ENCODE measurements at regions of chr2 and their contacts with region 1.

Region 1: DNA sequence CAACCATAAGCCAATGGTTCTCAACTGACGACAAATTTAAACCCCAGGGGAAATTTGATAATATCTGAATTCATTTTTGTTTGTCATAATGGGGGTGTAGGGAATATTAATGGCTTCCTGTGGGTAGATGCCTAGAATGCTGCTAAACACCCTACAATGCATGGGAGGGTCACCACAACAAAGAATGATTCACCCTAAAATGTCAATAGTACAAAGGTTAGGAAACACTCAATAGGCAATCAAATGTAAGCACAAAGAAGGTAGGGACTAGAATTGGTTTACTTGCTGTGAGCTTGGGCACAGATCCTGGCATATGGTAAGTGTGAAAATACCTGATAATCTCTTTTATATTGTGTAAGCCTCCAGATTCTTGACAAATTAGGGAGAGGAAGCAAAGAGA is 20.1 kb upstream of the FANCL start:
- DNase-seq: no peak

Region 2: GRCh38 chr2:58237741-58238140 is 23.5 kb before region 1 on chr2:
- intact Hi-C with region 1: no loop called
- DNase-seq: no peak

Region 3: DNA sequence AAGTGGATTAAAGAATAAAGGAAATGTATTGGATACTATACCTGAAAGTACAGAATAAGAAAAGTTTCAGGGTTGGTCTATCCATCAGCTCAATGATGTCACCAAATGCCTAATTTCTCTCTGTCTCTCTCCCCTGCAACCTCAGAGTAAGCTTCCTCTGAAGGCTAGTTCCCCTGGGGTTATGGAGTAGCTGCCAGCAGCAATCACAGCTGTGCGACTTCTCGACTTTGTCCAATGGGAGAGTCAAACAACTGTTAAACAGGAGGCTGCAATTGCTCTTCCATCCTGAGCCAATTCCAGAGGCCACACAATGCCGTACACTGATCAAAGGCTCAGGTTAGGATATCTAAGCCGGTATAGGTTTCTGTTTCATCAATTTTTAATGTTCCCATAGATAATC is 75.2 kb after region 1 on chr2:
- intact Hi-C with region 1: loop called in 1 of 2 experiments (anchors 2 kb)
- DNase-seq: no peak

Measured in posterior vena cava (tissue), 2 donors.